IMR-90 (cell line): ENCODE measurements at regions of chr3 and their contacts with region 1.

Region 1: GRCh38 chr3:112519424-112520001 is 20.2 kb upstream of the BTLA start:
- DNase-seq: peak; percentile 78
- ATAC-seq: peak; percentile 98
- H3K4me3 ChIP-seq: no peak overlapping the region
- H3K27ac ChIP-seq: no peak overlapping the region
- H3K4me1 ChIP-seq: no peaks in the 10 kb centered on the region
- H3K27me3 ChIP-seq: no peaks in the 10 kb centered on the region
- CTCF ChIP-seq: peak; percentile 84
- POLR2A ChIP-seq: no peak
- RAD21 ChIP-seq: peak; percentile 84

Region 2: DNA sequence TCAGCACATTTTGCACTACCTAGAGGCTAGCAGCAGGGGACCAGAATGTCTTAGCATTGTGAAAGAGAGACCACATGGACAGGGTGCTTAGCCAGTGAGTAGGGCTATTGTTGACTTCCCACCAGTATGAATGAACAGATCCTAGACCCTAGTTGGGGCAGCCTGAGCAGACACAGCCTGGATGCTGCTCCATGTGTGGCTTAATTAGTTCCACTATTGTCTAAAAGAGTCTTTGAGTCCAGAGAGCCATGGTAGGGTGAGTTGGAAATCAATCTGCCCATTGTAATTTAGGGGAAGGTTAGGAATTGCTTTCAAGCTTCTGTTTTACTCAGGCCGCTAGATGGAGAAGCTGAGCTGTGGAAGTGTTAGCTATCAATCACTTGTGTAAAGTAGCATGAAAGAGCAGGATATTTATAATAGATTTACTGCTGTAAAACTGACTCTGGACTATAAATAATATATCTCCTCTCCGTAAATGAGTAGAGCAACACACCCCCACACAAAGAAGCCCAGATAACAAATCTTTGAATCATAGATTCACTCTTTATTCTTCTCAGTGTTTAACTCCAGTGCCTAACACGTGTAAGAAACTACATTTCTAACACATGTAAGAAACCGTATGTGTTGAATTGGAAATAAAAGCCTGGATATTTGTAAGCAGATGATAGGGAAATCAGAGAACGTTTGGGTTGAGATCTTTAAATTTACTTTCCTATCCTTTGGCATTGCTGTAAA is 382.4 kb before region 1 on chr3:
- CTCF ChIA-PET with region 1: no interaction called
- POLR2A ChIA-PET with region 1: no interaction called
- dilution Hi-C with region 1: no loop called
- in situ Hi-C with region 1: loop called (anchors 25 kb)
- intact Hi-C with region 1: loop called (anchors 1 kb)
- DNase-seq: peak; percentile 34
- ATAC-seq: peak; percentile 74
- H3K4me3 ChIP-seq: no peak overlapping the region
- H3K27ac ChIP-seq: no peak overlapping the region
- H3K4me1 ChIP-seq: no peaks in the 10 kb centered on the region
- H3K27me3 ChIP-seq: no peaks in the 10 kb centered on the region
- CTCF ChIP-seq: peak; percentile 53
- POLR2A ChIP-seq: no peak
- RAD21 ChIP-seq: peak; percentile 52

Region 3: GRCh38 chr3:112303764-112304325 is 215.7 kb before region 1 on chr3:
- CTCF ChIA-PET with region 1: interaction called, 7 read pairs
- POLR2A ChIA-PET with region 1: no interaction called
- dilution Hi-C with region 1: loop called (anchors 25 kb)
- in situ Hi-C with region 1: loop called (anchors 10 kb)
- intact Hi-C with region 1: no loop called
- DNase-seq: peak; percentile 28
- ATAC-seq: peak; percentile 64
- H3K4me3 ChIP-seq: peak overlapping the region; percentile 27; the same call in 1 of the 2 replicates
- H3K27ac ChIP-seq: no peak overlapping the region
- H3K4me1 ChIP-seq: peaks cover 12% of the 10 kb centered on the region
- H3K27me3 ChIP-seq: no peaks in the 10 kb centered on the region
- CTCF ChIP-seq: no peak
- POLR2A ChIP-seq: no peak
- RAD21 ChIP-seq: no peak

Region 4: DNA sequence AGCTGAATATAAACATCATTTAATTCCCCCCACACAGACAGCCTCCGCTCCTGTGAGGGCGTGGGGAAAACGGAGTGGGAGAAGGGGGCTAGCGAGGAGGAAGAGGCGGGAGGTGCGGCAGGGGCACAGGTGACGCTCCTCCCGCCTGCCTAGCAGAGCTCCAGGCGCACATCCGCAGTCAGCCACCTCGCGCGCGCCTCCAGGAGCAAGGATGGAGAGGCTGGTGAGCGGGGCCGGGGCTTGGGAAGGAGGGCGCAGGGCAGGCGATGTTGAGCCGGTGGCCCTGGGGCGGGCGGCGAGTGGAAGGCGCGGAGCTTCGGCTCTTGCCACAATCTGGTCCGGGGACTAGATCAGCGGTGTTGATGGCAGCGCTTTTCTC is 186.5 kb before region 1 on chr3 and contains the start of gene CD200:
- CTCF ChIA-PET with region 1: no interaction called
- POLR2A ChIA-PET with region 1: no interaction called
- dilution Hi-C with region 1: no loop called
- in situ Hi-C with region 1: loop called (anchors 5 kb)
- intact Hi-C with region 1: no loop called
- DNase-seq: peak; percentile 16
- ATAC-seq: peak; percentile 87
- H3K4me3 ChIP-seq: peak within 1 kb of the TSS; percentile 40
- H3K27ac ChIP-seq: peak within 1 kb of the TSS; percentile 15; the same call in 1 of the 2 replicates
- H3K4me1 ChIP-seq: no peaks in the 10 kb centered on the region
- H3K27me3 ChIP-seq: peaks cover 10% of the 10 kb centered on the region; the same call in 1 of the 2 replicates
- CTCF ChIP-seq: no peak
- POLR2A ChIP-seq: no peak
- RAD21 ChIP-seq: no peak
- total RNA-seq, gene CD200: 0.83 and 1.1 TPM in 2 replicates

Region 5: DNA sequence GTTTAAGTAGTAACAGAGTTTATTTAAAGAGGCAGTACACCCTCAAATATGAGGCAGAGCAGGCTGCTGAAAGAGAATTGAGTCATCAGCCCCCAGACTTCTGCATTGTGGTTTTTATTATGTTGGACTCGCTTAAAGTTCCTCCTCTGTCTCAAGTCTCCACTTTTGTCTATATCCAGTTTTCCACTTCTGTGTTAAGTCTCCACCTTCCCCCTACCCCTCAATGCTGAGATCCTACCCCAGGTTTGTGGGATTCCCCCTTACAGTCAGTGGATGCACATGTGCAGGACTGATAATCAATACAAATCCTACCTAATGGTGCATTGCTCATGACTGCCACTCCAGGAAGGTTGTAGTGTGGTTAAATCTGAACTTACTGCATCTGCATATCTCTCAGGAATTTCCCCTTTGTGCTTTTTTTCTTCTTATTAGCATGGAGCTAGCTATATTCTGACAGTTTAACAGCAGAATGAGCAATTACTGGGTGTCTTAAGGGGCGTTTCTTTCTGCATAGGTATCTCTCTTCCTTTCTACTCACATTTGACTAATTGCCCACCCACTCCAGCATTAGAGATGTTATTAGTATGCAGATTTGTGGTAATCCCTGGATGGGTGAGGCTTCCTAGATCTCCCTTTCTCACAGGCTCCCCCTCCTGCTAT is 339.0 kb after region 1 on chr3:
- CTCF ChIA-PET with region 1: no interaction called
- POLR2A ChIA-PET with region 1: no interaction called
- dilution Hi-C with region 1: no loop called
- in situ Hi-C with region 1: no loop called
- intact Hi-C with region 1: no loop called
- DNase-seq: peak; percentile 10
- ATAC-seq: no peak
- H3K4me3 ChIP-seq: no peak overlapping the region
- H3K27ac ChIP-seq: no peak overlapping the region
- H3K4me1 ChIP-seq: no peaks in the 10 kb centered on the region
- H3K27me3 ChIP-seq: no peaks in the 10 kb centered on the region
- CTCF ChIP-seq: no peak
- POLR2A ChIP-seq: no peak
- RAD21 ChIP-seq: no peak